ENCODE measurements at regions of chr9 and their contacts with region 1.

Region 1: DNA sequence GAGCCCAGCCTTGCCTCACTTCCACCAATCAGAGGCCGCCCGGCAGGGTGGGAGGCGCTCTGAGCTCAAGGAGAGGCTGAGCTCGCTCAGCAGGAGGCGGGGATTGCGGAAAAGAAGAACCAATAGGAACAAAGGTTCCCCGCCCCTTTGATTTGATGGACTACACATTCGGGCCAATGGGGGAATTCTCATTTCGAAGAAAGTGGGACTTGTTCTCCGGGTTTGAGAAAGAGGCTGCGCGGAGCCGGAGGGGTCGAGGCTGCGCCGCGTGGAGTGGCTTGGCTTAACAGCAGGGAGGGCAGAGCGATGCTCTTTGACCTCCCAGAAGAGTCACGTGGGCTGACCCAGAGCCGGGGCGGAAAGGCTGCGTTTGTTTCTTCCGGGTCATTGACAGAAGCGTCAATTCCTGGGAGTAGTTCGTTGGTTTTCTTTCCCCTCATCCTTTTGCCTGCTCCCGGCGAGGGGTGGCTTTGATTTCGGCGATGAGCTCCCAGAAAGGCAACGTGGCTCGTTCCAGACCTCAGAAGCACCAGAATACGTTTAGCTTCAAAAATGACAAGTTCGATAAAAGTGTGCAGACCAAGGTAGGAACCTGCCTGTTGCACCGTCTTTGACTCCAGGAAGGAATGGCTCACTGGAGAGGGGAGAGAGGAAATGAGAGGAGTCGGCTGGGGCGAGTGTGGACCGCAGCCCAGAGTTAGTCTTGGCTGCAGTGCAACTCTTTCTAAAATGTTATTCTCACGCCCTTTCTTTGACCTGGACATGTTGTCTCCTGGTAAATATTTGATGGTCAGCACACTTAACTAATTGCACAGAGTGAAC is at the start of gene C9orf85:
- DNase-seq: peak; percentile 98
- ATAC-seq: peak; percentile 93
- H3K4me3 ChIP-seq: peak within 1 kb of the TSS; percentile 72 to 99 (median 85)
- H3K4me3 Mint-ChIP-seq: peak within 1 kb of the TSS; percentile 100
- H3K27ac ChIP-seq: peak within 1 kb of the TSS; percentile 74 to 80
- H3K27ac Mint-ChIP-seq: peak within 1 kb of the TSS; percentile 100
- H3K4me1 ChIP-seq: peaks cover 22 to 24% of the 10 kb centered on the region in 2 donors
- H3K4me1 Mint-ChIP-seq: peaks cover 66% of the 10 kb centered on the region
- H3K27me3 ChIP-seq: no peaks in the 10 kb centered on the region
- H3K27me3 Mint-ChIP-seq: no peaks in the 10 kb centered on the region
- CTCF ChIP-seq: no peak
- total RNA-seq, gene C9orf85: 9.4 and 9.6 TPM in 2 replicates

Region 2: DNA sequence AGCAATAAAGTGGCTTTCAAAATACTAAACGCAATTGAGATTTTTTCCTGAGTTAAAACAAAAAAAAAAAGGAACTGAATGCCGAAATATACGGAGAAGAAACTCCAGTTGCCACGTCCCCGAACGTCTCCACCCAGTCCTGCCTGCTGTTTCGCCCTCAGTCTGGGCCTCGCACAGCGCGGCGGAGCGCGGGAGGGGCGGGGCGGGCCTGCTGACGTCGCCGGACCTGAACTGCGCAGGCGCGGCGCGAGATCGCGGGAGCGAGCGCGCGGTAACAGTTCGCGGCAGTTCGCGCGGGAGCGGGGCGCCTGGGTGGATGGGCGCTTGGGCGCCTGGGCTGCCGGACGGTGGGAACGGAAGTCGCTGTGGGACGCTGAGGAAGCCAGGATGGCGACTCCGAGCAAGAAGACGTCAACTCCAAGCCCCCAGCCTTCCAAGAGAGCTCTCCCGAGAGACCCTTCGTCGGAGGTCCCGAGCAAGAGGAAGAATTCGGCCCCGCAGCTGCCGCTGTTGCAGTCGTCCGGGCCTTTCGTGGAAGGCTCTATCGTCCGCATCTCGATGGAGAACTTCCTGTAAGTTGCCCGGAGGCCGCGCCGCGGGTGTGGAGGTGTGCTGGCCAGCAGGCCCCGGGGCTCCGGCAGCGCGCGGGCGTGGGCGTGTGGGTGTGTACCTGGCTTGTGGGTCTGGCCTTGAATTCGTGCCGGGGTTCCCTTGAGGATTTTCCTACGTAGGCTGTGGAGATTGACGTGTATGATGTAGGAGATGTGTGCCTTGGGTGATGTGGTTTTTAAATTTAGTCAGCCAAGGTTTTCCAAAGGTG is 1652.6 kb before region 1 on chr9 and contains the start of gene SMC5:
- CTCF ChIA-PET with region 1: no interaction called
- POLR2A ChIA-PET with region 1: no interaction called
- intact Hi-C with region 1: loop called (anchors 2 kb)
- DNase-seq: peak; percentile 95
- ATAC-seq: peak; percentile 86
- H3K4me3 ChIP-seq: peak within 1 kb of the TSS; percentile 72 to 96 (median 93)
- H3K4me3 Mint-ChIP-seq: peak within 1 kb of the TSS; percentile 92
- H3K27ac ChIP-seq: peak within 1 kb of the TSS; percentile 89 to 93
- H3K27ac Mint-ChIP-seq: peak within 1 kb of the TSS; percentile 97
- H3K4me1 ChIP-seq: peaks cover 26 to 34% of the 10 kb centered on the region in 2 donors
- H3K4me1 Mint-ChIP-seq: peaks cover 45% of the 10 kb centered on the region
- H3K27me3 ChIP-seq: no peaks in the 10 kb centered on the region
- H3K27me3 Mint-ChIP-seq: no peaks in the 10 kb centered on the region
- CTCF ChIP-seq: no peak
- total RNA-seq, gene SMC5: 75.0 and 82.1 TPM in 2 replicates

Region 3: GRCh38 chr9:71783120-71783530 is 128.3 kb before region 1 on chr9:
- CTCF ChIA-PET with region 1: interaction called, 15 read pairs
- POLR2A ChIA-PET with region 1: interaction called, 6 read pairs
- intact Hi-C with region 1: no loop called
- DNase-seq: peak; percentile 90
- ATAC-seq: peak; percentile 93
- H3K4me3 ChIP-seq: peak overlapping the region in 3 of 5 experiments; percentile 6 to 22 (median 19)
- H3K4me3 Mint-ChIP-seq: peak overlapping the region; percentile 74
- H3K27ac ChIP-seq: peak overlapping the region; percentile 77 to 85
- H3K27ac Mint-ChIP-seq: peak overlapping the region; percentile 93
- H3K4me1 ChIP-seq: peaks cover 30 to 32% of the 10 kb centered on the region in 2 donors
- H3K4me1 Mint-ChIP-seq: peaks cover 44% of the 10 kb centered on the region
- H3K27me3 ChIP-seq: no peaks in the 10 kb centered on the region
- H3K27me3 Mint-ChIP-seq: no peaks in the 10 kb centered on the region
- CTCF ChIP-seq: peak; percentile 48

Region 4: GRCh38 chr9:71795097-71795813 is 116.2 kb before region 1 on chr9:
- CTCF ChIA-PET with region 1: interaction called, 6 read pairs
- POLR2A ChIA-PET with region 1: no interaction called
- intact Hi-C with region 1: loop called (anchors 1 kb)
- DNase-seq: peak; percentile 87
- ATAC-seq: peak; percentile 87
- H3K4me3 ChIP-seq: peak overlapping the region in 1 of 5 experiments; percentile 40
- H3K4me3 Mint-ChIP-seq: peak overlapping the region; percentile 92
- H3K27ac ChIP-seq: peak overlapping the region; percentile 84 to 92
- H3K27ac Mint-ChIP-seq: peak overlapping the region; percentile 93
- H3K4me1 ChIP-seq: peaks cover 77 to 80% of the 10 kb centered on the region in 2 donors
- H3K4me1 Mint-ChIP-seq: peaks cover 70% of the 10 kb centered on the region
- H3K27me3 ChIP-seq: no peaks in the 10 kb centered on the region
- H3K27me3 Mint-ChIP-seq: no peaks in the 10 kb centered on the region
- CTCF ChIP-seq: no peak

Region 5: GRCh38 chr9:71891557-71892189 is 19.8 kb before region 1 on chr9:
- CTCF ChIA-PET with region 1: interaction called, 4 read pairs
- POLR2A ChIA-PET with region 1: interaction called, 10 read pairs
- intact Hi-C with region 1: no loop called
- DNase-seq: peak; percentile 28
- ATAC-seq: peak; percentile 49
- H3K4me3 ChIP-seq: peak overlapping the region in 2 of 5 experiments; percentile 2 to 5
- H3K4me3 Mint-ChIP-seq: peak overlapping the region; percentile 1
- H3K27ac ChIP-seq: peak overlapping the region; percentile 31 to 71
- H3K27ac Mint-ChIP-seq: peak overlapping the region; percentile 1
- H3K4me1 ChIP-seq: peaks cover 31 to 58% of the 10 kb centered on the region in 2 donors
- H3K4me1 Mint-ChIP-seq: peaks cover 68% of the 10 kb centered on the region
- H3K27me3 ChIP-seq: no peaks in the 10 kb centered on the region
- H3K27me3 Mint-ChIP-seq: no peaks in the 10 kb centered on the region
- CTCF ChIP-seq: no peak

Region 6: GRCh38 chr9:71897577-71897976 is 13.9 kb before region 1 on chr9:
- CTCF ChIA-PET with region 1: interaction called, 4 read pairs
- POLR2A ChIA-PET with region 1: interaction called, 13 read pairs
- intact Hi-C with region 1: no loop called
- DNase-seq: peak; percentile 48
- ATAC-seq: peak; percentile 55
- H3K4me3 ChIP-seq: peak overlapping the region in 1 of 5 experiments; percentile 29
- H3K4me3 Mint-ChIP-seq: peak overlapping the region; percentile 50
- H3K27ac ChIP-seq: peak overlapping the region; percentile 51 to 69
- H3K27ac Mint-ChIP-seq: peak overlapping the region; percentile 32
- H3K4me1 ChIP-seq: peaks cover 69 to 86% of the 10 kb centered on the region in 2 donors
- H3K4me1 Mint-ChIP-seq: peaks cover 81% of the 10 kb centered on the region
- H3K27me3 ChIP-seq: no peaks in the 10 kb centered on the region
- H3K27me3 Mint-ChIP-seq: no peaks in the 10 kb centered on the region
- CTCF ChIP-seq: no peak

Region 7: GRCh38 chr9:71984403-71984802 is 72.9 kb after region 1 on chr9:
- CTCF ChIA-PET with region 1: no interaction called
- POLR2A ChIA-PET with region 1: no interaction called
- intact Hi-C with region 1: no loop called
- DNase-seq: no peak
- ATAC-seq: no peak
- H3K4me3 ChIP-seq: no peak overlapping the region
- H3K4me3 Mint-ChIP-seq: no peak overlapping the region
- H3K27ac ChIP-seq: no peak overlapping the region
- H3K27ac Mint-ChIP-seq: no peak overlapping the region
- H3K4me1 ChIP-seq: no peaks in the 10 kb centered on the region
- H3K4me1 Mint-ChIP-seq: peaks cover 4% of the 10 kb centered on the region
- H3K27me3 ChIP-seq: no peaks in the 10 kb centered on the region
- H3K27me3 Mint-ChIP-seq: no peaks in the 10 kb centered on the region
- CTCF ChIP-seq: no peak

Region 8: GRCh38 chr9:72364679-72365524 is 453.4 kb after region 1 on chr9 and contains the start of gene ZFAND5:
- CTCF ChIA-PET with region 1: no interaction called
- POLR2A ChIA-PET with region 1: interaction called, 3 read pairs
- intact Hi-C with region 1: loop called (anchors 5 kb)
- DNase-seq: peak; percentile 97
- ATAC-seq: peak; percentile 78
- H3K4me3 ChIP-seq: peak within 1 kb of the TSS; percentile 71 to 95 (median 80)
- H3K4me3 Mint-ChIP-seq: peak within 1 kb of the TSS; percentile 95
- H3K27ac ChIP-seq: peak within 1 kb of the TSS; percentile 99 to 100
- H3K27ac Mint-ChIP-seq: peak within 1 kb of the TSS; percentile 97
- H3K4me1 ChIP-seq: peaks cover 22 to 24% of the 10 kb centered on the region in 2 donors
- H3K4me1 Mint-ChIP-seq: peaks cover 40% of the 10 kb centered on the region
- H3K27me3 ChIP-seq: no peaks in the 10 kb centered on the region
- H3K27me3 Mint-ChIP-seq: no peaks in the 10 kb centered on the region
- CTCF ChIP-seq: no peak
- total RNA-seq, gene ZFAND5: 93.8 and 95.3 TPM in 2 replicates

Measured in B cell (primary cell).